Sciatic nerve (tissue), 2 donors: ENCODE measurements at regions of chr2 and their contacts with region 1.

Region 1: GRCh38 chr2:139946693-139947092 is 1166.5 kb upstream of the NXPH2 start:
- DNase-seq: no peak
- ATAC-seq: no peak

Region 2: GRCh38 chr2:140759426-140760156 is 812.9 kb after region 1 on chr2:
- intact Hi-C with region 1: loop called (anchors 5 kb)
- DNase-seq: no peak
- ATAC-seq: no peak